Activated B cell treated with CpG ODN at 0.5 μM for 24 hours (primary cell): ENCODE measurements at regions of chr22 and their contacts with region 1.

Region 1: DNA sequence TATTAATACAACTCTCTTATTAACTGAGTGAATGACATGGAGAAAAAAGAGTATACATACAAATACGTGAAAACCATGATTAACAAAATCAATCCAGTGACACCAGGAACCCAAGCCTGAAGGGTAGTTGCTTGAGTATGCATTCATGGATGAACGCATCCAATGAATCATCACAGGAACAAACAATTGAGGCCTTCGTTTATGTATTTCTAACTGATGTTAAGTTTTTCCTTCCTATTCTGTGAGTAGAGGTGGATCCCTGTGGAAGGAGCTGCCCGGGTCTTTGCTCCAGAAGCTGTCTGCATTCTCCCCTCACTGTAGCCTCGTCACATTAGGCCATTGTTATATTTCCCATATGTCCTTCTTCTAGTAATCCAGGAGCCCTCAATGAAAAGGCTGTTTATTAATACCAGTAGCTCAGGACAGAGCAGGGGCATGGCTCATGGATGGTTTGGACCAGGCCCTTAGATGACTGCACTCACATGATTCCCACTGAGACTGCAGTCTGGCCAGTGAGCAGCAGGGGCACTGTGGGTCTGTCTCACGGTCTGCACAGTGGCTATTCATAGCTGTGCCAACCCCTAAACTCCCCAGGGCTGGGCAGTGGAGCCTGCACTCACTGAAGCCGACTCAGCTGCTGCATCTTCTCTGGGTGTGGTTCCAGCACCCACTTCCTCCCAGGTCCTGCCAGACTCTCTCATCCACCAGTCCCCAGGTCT is 128.1 kb upstream of the TOP3B start:
- DNase-seq: peak; percentile 82
- ATAC-seq: peak; percentile 92
- H3K4me3 Mint-ChIP-seq: peak overlapping the region; percentile 67
- H3K27ac Mint-ChIP-seq: peak overlapping the region; percentile 95
- H3K4me1 Mint-ChIP-seq: peaks cover 47% of the 10 kb centered on the region
- H3K27me3 Mint-ChIP-seq: no peaks in the 10 kb centered on the region
- CTCF ChIP-seq: no peak

Region 2: DNA sequence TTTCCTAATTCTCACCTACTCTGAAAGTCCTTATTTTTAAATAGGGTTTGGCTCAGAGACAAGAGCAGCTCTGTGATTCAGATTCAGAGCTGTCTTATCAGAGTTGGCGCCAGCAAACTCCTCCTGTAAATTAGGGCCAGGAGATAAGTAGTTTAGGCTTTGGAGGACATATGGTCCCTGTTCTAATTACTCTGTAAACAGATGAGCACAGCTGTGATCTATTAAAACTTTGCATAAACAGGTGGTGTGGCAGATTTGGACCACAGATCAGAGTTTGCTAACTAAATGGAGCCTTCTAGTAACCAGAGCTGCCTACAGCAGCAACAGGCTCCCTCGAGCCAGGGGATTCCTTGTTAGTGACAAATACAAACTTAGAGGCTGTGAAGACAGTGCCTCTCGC is 403.0 kb before region 1 on chr22:
- CTCF ChIA-PET with region 1: no interaction called
- POLR2A ChIA-PET with region 1: no interaction called
- intact Hi-C with region 1: no loop called
- DNase-seq: no peak
- ATAC-seq: no peak
- H3K4me3 Mint-ChIP-seq: no peak overlapping the region
- H3K27ac Mint-ChIP-seq: no peak overlapping the region
- H3K4me1 Mint-ChIP-seq: peaks cover 5% of the 10 kb centered on the region
- H3K27me3 Mint-ChIP-seq: no peaks in the 10 kb centered on the region
- CTCF ChIP-seq: no peak

Region 3: DNA sequence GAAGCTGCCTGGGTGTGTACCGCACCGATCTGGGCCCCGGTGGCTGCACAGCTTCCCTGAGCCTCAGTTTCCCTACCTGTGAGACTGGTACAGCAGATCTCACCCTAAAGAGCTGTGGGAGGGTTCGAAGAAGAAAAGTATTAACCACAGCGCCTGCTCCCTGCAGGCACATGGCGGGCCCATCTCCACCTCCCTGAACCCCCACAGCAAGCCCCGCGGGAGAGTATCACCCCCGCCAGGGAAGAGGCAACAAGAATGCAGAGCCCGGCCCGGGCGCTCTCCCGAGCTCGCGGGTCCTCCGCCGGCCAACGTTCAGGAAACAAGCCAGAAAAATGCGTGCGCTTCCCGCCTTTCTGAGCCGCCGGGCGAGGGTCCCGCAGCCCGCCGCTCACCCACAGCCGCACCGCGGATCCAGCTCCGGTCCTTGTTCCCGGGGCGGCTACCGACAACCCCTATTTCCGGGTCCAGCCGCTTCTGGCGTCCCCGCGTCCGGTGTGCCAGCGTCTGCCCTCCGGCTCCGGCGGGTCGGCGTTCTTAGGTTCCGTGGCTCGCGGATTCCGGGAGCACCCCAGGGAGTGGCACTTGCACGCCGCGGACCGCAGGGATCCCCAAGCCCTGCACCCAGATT is 128.3 kb before region 1 on chr22 and contains the start of gene TOP3B:
- CTCF ChIA-PET with region 1: interaction called, 6 read pairs
- POLR2A ChIA-PET with region 1: interaction called, 6 read pairs
- intact Hi-C with region 1: loop called (anchors 2 kb)
- DNase-seq: peak; percentile 79
- ATAC-seq: peak; percentile 94
- H3K4me3 Mint-ChIP-seq: peak within 1 kb of the TSS; percentile 88
- H3K27ac Mint-ChIP-seq: peak within 1 kb of the TSS; percentile 87
- H3K4me1 Mint-ChIP-seq: peaks cover 37% of the 10 kb centered on the region
- H3K27me3 Mint-ChIP-seq: no peaks in the 10 kb centered on the region
- CTCF ChIP-seq: no peak
- total RNA-seq, gene TOP3B: 60.4 and 83.4 TPM in 2 replicates

Region 4: GRCh38 chr22:22060200-22061084 is 50.3 kb before region 1 on chr22:
- CTCF ChIA-PET with region 1: interaction called, 37 read pairs
- POLR2A ChIA-PET with region 1: interaction called, 3 read pairs
- intact Hi-C with region 1: loop called (anchors 1 kb)
- DNase-seq: peak; percentile 69
- ATAC-seq: peak; percentile 73
- H3K4me3 Mint-ChIP-seq: no peak overlapping the region
- H3K27ac Mint-ChIP-seq: peak overlapping the region; percentile 6
- H3K4me1 Mint-ChIP-seq: peaks cover 38% of the 10 kb centered on the region
- H3K27me3 Mint-ChIP-seq: no peaks in the 10 kb centered on the region
- CTCF ChIP-seq: no peak

Region 5: GRCh38 chr22:22085702-22086500 is 24.8 kb before region 1 on chr22:
- CTCF ChIA-PET with region 1: no interaction called
- POLR2A ChIA-PET with region 1: no interaction called
- intact Hi-C with region 1: no loop called
- DNase-seq: no peak
- ATAC-seq: no peak
- H3K4me3 Mint-ChIP-seq: no peak overlapping the region
- H3K27ac Mint-ChIP-seq: no peak overlapping the region
- H3K4me1 Mint-ChIP-seq: peaks cover 5% of the 10 kb centered on the region
- H3K27me3 Mint-ChIP-seq: no peaks in the 10 kb centered on the region
- CTCF ChIP-seq: no peak

Region 6: GRCh38 chr22:22156716-22157347 is 46.1 kb after region 1 on chr22:
- CTCF ChIA-PET with region 1: interaction called, 30 read pairs
- POLR2A ChIA-PET with region 1: interaction called, 18 read pairs
- intact Hi-C with region 1: loop called (anchors 1 kb)
- DNase-seq: peak; percentile 64
- ATAC-seq: peak; percentile 75
- H3K4me3 Mint-ChIP-seq: peak overlapping the region; percentile 78
- H3K27ac Mint-ChIP-seq: peak overlapping the region; percentile 98
- H3K4me1 Mint-ChIP-seq: peaks cover 52% of the 10 kb centered on the region
- H3K27me3 Mint-ChIP-seq: no peaks in the 10 kb centered on the region
- CTCF ChIP-seq: peak; percentile 81

Region 7: GRCh38 chr22:22195265-22196017 is 84.7 kb after region 1 on chr22:
- CTCF ChIA-PET with region 1: interaction called, 30 read pairs
- POLR2A ChIA-PET with region 1: interaction called, 20 read pairs
- intact Hi-C with region 1: loop called (anchors 1 kb)
- DNase-seq: peak; percentile 79
- ATAC-seq: peak; percentile 71
- H3K4me3 Mint-ChIP-seq: peak overlapping the region; percentile 68
- H3K27ac Mint-ChIP-seq: peak overlapping the region; percentile 85
- H3K4me1 Mint-ChIP-seq: peaks cover 59% of the 10 kb centered on the region
- H3K27me3 Mint-ChIP-seq: no peaks in the 10 kb centered on the region
- CTCF ChIP-seq: peak; percentile 80

Region 8: GRCh38 chr22:22235558-22235957 is 124.9 kb after region 1 on chr22:
- CTCF ChIA-PET with region 1: interaction called, 25 read pairs
- POLR2A ChIA-PET with region 1: no interaction called
- intact Hi-C with region 1: loop called (anchors 1 kb)
- DNase-seq: no peak
- ATAC-seq: no peak
- H3K4me3 Mint-ChIP-seq: peak overlapping the region; percentile 38
- H3K27ac Mint-ChIP-seq: no peak overlapping the region
- H3K4me1 Mint-ChIP-seq: peaks cover 25% of the 10 kb centered on the region
- H3K27me3 Mint-ChIP-seq: peaks cover 2% of the 10 kb centered on the region
- CTCF ChIP-seq: no peak

Region 9: GRCh38 chr22:23137905-23138561 is 1027.3 kb after region 1 on chr22:
- CTCF ChIA-PET with region 1: no interaction called
- POLR2A ChIA-PET with region 1: no interaction called
- intact Hi-C with region 1: loop called (anchors 2 kb)
- DNase-seq: peak; percentile 42
- ATAC-seq: peak; percentile 60
- H3K4me3 Mint-ChIP-seq: peak overlapping the region; percentile 68
- H3K27ac Mint-ChIP-seq: peak overlapping the region; percentile 94
- H3K4me1 Mint-ChIP-seq: peaks cover 63% of the 10 kb centered on the region
- H3K27me3 Mint-ChIP-seq: no peaks in the 10 kb centered on the region
- CTCF ChIP-seq: no peak